ENCODE measurements at regions of chr7 and their contacts with region 1.

Region 1: DNA sequence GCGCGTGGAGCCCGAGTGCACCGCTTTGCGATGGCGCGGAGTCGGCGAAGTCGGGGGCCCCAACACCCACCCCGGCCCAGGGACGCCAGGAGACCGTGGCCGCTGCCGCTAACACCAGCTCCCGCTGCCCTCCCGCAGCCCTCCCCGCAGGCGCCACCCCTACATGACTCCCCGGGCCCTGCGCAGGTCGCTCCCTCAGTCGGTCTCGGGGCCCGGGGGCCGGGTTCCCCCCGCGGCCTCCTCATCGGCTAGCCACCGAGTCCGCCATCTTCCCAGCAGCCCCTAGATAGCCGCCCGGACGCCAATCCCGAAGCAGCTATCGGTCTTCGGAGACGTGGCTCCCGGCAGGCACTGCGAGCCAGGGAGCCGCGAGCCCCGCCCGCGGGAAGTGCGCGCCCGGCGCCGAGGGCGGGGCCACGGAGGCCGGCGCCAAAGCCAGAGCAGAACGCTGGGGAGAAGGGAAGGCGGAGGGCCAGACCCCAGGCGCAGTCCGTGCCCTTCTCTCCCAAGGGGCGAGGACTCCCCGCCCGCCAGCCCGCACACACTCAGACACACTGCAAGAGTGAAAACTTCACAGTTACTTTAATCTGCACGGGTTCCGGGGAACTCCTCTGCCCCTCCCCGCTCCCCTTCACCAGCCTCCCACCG is at the start of gene FASTK:
- DNase-seq: peak; percentile 91
- H3K4me3 ChIP-seq: peak within 1 kb of the TSS; percentile 83 to 87
- H3K27ac ChIP-seq: peak within 1 kb of the TSS; percentile 88 to 90
- H3K4me1 ChIP-seq: peaks cover 27% of the 10 kb centered on the region
- H3K27me3 ChIP-seq: no peaks in the 10 kb centered on the region
- CTCF ChIP-seq: peak in 2 of 4 experiments; percentile 5 to 9
- POLR2A ChIP-seq: peak; percentile 74
- total RNA-seq, gene FASTK: 107 to 122 TPM

Region 2: GRCh38 chr7:150962553-150963399 is 117.9 kb before region 1 on chr7:
- intact Hi-C with region 1: loop called (anchors 10 kb)
- DNase-seq: no peak
- H3K4me3 ChIP-seq: no peak overlapping the region
- H3K27ac ChIP-seq: peak overlapping the region; percentile 57 to 60
- H3K4me1 ChIP-seq: no peaks in the 10 kb centered on the region
- H3K27me3 ChIP-seq: no peaks in the 10 kb centered on the region
- CTCF ChIP-seq: peak; percentile 38 to 87 (median 69)
- POLR2A ChIP-seq: no peak

Region 3: DNA sequence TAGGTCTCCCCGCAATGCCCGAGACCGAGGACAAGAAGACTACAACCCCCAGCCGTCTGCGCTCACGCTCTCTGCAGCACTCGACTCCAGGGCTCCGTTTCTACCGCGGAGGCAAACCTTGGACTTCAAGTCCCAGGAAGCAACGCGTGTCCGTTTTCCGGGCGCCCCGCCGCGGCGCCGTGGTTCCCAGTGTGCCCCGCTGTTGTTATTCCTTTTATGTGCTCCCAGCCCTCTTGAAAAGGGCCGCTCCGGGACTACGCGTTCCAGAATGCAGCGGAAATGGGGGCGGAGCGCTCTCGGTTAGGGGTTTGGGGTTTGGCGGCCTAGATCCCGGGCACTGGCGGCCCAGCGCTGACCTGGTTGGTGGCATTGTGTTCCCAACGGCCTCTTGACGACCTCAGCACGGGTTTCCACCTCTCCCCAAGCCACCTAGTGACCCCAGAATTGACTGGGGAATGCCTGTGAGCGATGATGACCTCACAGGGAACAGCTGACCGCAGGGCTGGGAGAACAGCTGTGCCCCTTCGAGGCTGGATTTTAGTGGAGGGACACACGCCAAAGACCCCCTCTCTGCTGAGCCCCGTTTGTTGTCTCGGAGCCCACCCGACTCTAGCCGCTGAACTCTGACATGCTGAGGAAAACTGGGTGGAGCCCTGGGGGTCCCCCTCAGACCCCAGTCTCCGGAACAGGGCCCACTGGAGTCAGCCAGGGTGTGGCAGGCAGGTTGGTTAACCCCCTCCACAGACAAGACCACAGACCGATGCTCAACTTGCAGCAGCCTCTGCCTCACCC is 22.5 kb before region 1 on chr7:
- intact Hi-C with region 1: loop called (anchors 2 kb)
- DNase-seq: peak; percentile 100
- H3K4me3 ChIP-seq: peak overlapping the region; percentile 57 to 59
- H3K27ac ChIP-seq: peak overlapping the region; percentile 93 to 97
- H3K4me1 ChIP-seq: peaks cover 29% of the 10 kb centered on the region
- H3K27me3 ChIP-seq: no peaks in the 10 kb centered on the region
- CTCF ChIP-seq: peak in 1 of 4 experiments; percentile 20
- POLR2A ChIP-seq: peak; percentile 98

Measured in prostate gland (tissue), 2 donors.